HEK293T (cell line): ENCODE measurements at regions of chrX and their contacts with region 1.

Region 1: GRCh38 chrX:103774070-103774642 is 2.5 kb upstream of the PLP1 start:
- DNase-seq: no peak

Region 2: DNA sequence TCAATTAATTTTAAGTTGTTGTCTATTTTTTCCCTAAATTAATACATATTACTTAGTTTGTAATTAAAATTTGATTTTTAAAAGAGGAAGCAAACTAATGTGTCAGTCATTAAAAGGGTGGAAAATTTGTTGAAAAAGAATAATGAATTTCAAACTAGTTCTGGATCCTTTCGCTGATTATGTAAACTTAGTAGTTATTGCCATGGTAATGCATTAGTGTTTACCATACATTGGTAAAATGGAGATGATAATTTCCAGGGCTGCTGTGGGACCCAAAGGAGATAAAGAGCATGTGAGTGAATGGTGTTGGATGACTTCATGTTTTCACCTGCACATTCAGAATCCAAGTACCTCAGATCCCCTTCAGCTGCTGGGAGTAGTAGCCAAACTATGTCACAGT is 391.3 kb before region 1 on chrX:
- CTCF ChIA-PET with region 1: no interaction called
- POLR2A ChIA-PET with region 1: no interaction called
- DNase-seq: no peak

Region 3: GRCh38 chrX:103686199-103687072 is 87.7 kb before region 1 on chrX and contains the start of gene MORF4L2:
- CTCF ChIA-PET with region 1: no interaction called
- POLR2A ChIA-PET with region 1: no interaction called
- DNase-seq: peak; percentile 91

Region 4: DNA sequence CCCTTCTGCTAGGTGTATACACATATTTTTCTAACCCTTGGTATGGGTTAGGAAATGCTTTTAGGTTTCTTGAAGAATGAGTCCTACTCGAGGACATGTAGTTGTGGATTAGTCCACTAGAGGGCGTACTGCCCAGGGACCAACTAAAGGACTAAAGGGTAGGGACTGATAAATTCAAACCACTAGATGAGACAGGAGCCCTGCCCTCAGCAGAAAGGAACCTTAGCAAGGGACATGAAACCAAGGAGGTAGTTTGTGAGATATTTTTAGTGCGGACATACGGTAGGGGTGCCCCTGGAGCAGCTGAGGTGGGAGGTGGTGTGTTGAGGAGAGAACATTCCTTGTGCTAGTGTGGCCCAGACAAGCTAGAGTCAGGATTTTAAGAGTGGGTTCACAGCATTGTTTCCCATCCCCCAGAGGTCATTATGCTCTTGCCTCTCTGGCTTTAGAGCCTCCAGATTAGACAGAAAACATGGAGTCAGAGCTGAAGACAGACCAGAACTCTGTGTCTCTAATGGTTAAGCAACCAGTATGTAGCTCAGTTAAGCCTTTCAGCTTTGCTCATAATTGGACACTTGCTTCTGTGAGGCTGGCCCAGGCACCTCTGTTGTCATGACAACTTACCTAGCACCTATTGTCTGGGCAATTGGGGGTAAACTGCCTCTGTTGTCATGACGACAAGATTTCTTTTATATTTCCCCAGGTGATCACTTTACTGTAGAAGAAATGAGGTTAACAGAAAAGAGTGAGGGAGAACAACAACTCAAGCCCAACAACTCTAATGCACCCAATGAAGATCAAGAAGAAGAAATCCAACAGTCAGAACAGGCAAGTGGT is 62.4 kb before region 1 on chrX:
- CTCF ChIA-PET with region 1: interaction called, 10 read pairs
- POLR2A ChIA-PET with region 1: no interaction called
- DNase-seq: peak; percentile 90